Vagina (tissue), 2 donors: ENCODE measurements at regions of chr1 and their contacts with region 1.

Region 1: GRCh38 chr1:232629250-232630046 is 485 bp downstream of the SIPA1L2 start:
- DNase-seq: no peak
- H3K4me3 ChIP-seq: peak overlapping the region; percentile 88 to 89
- H3K27ac ChIP-seq: peak overlapping the region; percentile 84
- H3K4me1 ChIP-seq: peaks cover 32% of the 10 kb centered on the region
- H3K27me3 ChIP-seq: no peaks in the 10 kb centered on the region
- CTCF ChIP-seq: no peak
- POLR2A ChIP-seq: no peak

Region 2: DNA sequence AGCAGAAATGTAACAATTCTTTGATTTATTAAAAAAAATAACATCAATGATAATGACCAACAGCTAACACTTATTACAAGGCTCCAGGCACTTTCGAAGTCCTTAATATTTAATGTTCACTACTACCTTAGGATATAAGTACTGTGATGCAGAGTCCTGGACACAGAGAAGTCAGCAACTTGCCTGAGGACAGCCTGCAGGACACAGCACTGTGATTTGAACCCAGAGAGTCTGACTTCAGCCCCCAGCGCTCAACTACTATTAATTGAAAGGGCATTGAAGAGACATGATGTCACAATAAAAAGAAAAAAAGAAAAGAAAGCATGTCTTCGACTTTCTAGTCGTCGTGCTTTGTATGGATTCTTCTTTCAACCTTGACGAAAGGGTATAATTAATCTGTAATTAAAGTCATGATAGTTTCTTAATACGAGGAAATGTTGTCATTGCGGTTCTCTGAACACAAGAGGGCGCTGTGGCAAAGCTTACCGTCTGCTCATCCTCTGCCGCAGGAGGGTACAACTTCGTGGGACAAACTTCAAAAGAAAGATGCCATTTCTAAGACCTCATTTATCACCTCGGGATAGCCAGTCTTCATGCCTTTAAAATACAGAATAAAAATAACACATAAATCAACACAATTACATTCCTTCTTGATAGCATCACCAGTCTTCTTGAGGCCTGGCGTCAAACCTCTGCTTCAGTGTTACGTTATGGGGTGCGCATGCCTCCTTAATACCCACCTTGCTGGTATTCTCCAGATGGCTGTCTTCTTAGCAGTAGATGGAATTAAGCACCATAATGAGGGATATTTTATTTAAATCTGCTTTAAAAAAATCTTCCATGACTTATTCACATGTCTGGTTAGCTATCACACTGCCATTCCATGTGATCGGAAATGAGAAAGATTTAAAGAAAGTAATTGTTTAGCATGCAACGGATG is 762.8 kb before region 1 on chr1:
- intact Hi-C with region 1: loop called (anchors 10 kb)
- DNase-seq: no peak
- H3K4me3 ChIP-seq: no peak overlapping the region
- H3K27ac ChIP-seq: no peak overlapping the region
- H3K4me1 ChIP-seq: peaks cover 18% of the 10 kb centered on the region
- H3K27me3 ChIP-seq: no peaks in the 10 kb centered on the region
- CTCF ChIP-seq: peak; percentile 37 to 84 (median 78)
- POLR2A ChIP-seq: no peak